ENCODE measurements at regions of chr9 and their contacts with region 1.

Region 1: DNA sequence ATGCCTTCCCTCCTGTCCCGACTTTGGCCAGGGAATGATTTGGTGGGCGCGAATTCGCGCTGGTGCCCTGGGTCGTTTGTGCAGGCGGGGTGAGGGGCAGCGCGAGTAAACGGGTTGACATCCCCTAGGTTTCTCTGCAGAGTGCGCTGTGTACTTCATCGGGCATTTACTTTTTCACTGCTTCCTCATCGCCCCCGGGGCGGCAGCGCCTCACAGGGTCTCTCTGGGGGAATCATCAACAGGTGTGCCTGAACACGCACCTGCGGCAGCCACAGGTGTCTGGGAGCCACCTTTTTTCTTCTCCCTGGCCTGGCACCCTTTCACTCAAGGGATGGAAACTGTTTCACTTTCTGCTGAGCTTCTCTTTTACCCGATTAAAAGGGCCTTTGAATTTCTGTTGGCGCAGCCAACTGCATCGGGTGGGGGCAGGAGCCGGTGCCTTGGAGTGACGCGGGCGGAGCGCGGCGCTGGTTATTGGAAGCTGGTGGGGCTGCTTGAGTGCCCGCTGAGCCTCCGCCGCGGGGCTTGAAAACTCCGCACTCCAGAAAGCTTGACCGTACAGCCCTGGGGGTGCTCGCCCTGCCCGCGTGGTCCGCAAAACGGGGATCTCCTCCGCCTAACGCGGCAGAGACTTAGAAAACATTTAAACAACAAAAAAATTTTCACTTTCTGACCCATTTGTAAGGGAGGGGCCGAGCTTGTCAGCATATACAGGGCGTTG is 52.1 kb upstream of the TJP2 start:
- DNase-seq: peak; percentile 50 to 85 (median 79)
- H3K4me3 ChIP-seq: peak overlapping the region; percentile 43 to 91 (median 81)
- H3K27ac ChIP-seq: peak overlapping the region; percentile 40 to 95 (median 87)
- H3K27me3 ChIP-seq: no peaks in the 10 kb centered on the region
- CTCF ChIP-seq: peak in 22 of 56 donors; percentile 7 to 42 (median 20)

Region 2: GRCh38 chr9:69174616-69175463 is 52.9 kb after region 1 on chr9:
- intact Hi-C with region 1: loop called (anchors 2 to 5 kb)
- DNase-seq: peak in 4 of 10 donors; percentile 31 to 77 (median 48)
- H3K4me3 ChIP-seq: peak overlapping the region; percentile 51 to 91 (median 78)
- H3K27ac ChIP-seq: peak overlapping the region in 56 of 59 donors; percentile 4 to 92 (median 87)
- H3K27me3 ChIP-seq: no peaks in the 10 kb centered on the region
- CTCF ChIP-seq: no peak

Region 3: DNA sequence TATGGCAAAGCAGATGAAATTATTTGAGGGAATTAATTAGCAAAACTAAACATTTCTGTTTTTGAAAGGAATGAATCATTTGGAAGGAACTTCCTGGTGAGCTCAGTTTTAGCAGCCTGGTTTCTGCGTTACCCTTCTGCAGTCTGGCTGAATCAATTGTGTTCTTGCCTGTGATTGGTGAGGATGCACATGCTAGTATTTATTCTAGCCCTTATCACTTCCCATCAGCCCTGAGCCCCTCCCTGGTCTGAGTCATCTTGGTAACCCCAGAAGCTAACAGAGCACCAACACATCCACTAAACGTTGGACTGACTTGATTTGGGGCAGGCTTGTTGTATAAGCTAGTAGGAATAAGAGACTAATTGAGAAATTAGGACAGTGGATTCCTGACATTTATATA is 58.7 kb after region 1 on chr9:
- intact Hi-C with region 1: loop called in 1 of 2 experiments (anchors 2 kb)
- DNase-seq: peak in 1 of 10 donors; percentile 51
- H3K4me3 ChIP-seq: no peak overlapping the region
- H3K27ac ChIP-seq: peak overlapping the region in 52 of 59 donors; percentile 11 to 99 (median 84)
- H3K27me3 ChIP-seq: no peaks in the 10 kb centered on the region
- CTCF ChIP-seq: no peak

Region 4: GRCh38 chr9:69190086-69190862 is 68.3 kb after region 1 on chr9:
- intact Hi-C with region 1: loop called (anchors 5 kb)
- DNase-seq: no peak
- H3K4me3 ChIP-seq: no peak overlapping the region
- H3K27ac ChIP-seq: peak overlapping the region in 55 of 59 donors; percentile 6 to 99 (median 71)
- H3K27me3 ChIP-seq: no peaks in the 10 kb centered on the region
- CTCF ChIP-seq: no peak